ENCODE measurements at regions of chr6 and their contacts with region 1.

Region 1: GRCh38 chr6:131182991-131183425 is 47.7 kb downstream of the AKAP7 start:
- DNase-seq: peak; percentile 67 to 82 (median 80)
- H3K4me3 ChIP-seq: peak overlapping the region in 2 of 7 experiments; percentile 37 to 61
- H3K27ac ChIP-seq: no peak overlapping the region
- H3K4me1 ChIP-seq: peaks cover 0 to 7% (median 5%) of the 10 kb centered on the region in 4 experiments
- H3K27me3 ChIP-seq: no peaks in the 10 kb centered on the region

Region 2: DNA sequence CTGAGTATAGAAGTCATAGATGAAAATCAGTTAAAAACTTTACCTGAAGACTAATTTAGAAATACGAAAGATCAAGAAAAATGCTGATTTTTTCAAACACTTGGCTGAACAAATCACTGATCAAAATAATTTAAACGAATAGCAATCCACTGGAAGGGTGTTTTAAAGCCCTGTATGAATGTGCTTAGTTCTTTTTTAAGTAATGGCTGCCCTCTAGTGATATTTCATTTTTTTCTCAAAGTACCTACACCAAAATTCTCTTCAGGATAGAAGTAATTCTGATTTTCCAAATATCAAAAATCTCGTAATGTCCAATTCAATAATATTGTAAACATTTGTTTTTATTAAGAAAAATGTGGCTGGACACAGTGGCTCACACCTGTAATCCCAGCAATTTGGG is 15.2 kb before region 1 on chr6:
- CTCF ChIA-PET with region 1: interaction called, 10 read pairs
- POLR2A ChIA-PET with region 1: no interaction called
- DNase-seq: peak in 2 of 3 donors; percentile 8 to 9
- H3K4me3 ChIP-seq: no peak overlapping the region
- H3K27ac ChIP-seq: no peak overlapping the region
- H3K4me1 ChIP-seq: no peaks in the 10 kb centered on the region
- H3K27me3 ChIP-seq: no peaks in the 10 kb centered on the region

Region 3: DNA sequence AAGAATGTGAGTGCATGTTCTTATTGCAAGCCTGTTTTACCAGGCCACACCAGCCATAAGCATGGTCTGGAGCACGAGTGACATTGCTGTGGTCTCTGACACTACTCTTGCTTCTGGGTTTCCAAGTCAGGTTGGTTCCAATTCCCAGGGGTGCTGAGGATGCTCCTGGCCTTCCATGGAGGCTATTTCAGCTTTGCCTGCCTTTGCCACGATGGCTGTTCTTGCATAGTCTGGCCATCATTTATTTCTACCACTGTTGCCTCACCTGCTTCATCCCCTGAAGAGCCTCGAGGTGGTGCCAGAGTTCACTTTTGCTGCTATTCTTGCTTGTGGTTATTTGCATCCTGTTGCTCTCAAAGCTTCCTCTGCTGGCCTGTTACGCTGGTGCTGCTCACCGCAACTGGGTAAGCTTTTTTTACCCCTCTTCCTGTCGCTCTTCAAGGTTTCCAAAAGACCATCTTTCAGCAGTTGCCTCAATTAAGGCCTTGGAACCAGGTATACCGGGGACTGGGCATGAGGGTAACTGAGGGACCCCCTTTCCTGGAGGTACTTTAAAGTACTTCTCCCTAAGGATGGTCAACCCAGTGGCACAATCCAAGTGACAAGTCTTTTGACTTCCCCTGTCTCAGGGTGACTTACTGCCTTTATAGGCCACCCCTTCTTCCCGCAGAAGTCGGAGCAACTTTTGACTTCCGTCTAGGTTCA is 16.7 kb after region 1 on chr6:
- CTCF ChIA-PET with region 1: interaction called, 23 read pairs
- POLR2A ChIA-PET with region 1: no interaction called
- DNase-seq: peak; percentile 94 to 98 (median 97)
- H3K4me3 ChIP-seq: peak overlapping the region in 3 of 7 experiments; percentile 16 to 45 (median 43)
- H3K27ac ChIP-seq: peak overlapping the region in 1 of 2 experiments; percentile 44
- H3K4me1 ChIP-seq: peaks cover 22 to 40% (median 32%) of the 10 kb centered on the region in 4 experiments
- H3K27me3 ChIP-seq: no peaks in the 10 kb centered on the region

Region 4: DNA sequence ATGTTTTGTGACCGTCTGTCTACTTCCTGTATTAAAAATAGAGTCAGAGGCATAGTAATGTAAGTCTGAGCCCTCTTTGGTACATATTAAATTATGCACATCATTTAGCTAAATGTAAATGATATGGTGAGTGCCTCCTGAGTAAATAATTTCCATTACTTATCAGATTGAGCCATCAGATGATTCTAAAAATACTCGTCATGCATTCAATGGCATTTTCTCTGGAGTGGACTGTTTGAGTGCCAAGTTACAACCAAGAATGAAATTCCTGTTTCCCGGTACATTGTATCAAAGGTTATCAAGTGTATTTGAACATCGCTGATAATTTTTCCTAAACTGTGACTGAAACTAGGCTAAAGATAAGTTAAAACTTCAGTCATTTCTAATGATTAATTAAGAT is 33.2 kb after region 1 on chr6:
- CTCF ChIA-PET with region 1: no interaction called
- POLR2A ChIA-PET with region 1: no interaction called
- DNase-seq: no peak
- H3K4me3 ChIP-seq: no peak overlapping the region
- H3K27ac ChIP-seq: no peak overlapping the region
- H3K4me1 ChIP-seq: peaks cover 0 to 7% (median 4%) of the 10 kb centered on the region in 4 experiments
- H3K27me3 ChIP-seq: no peaks in the 10 kb centered on the region

Region 5: DNA sequence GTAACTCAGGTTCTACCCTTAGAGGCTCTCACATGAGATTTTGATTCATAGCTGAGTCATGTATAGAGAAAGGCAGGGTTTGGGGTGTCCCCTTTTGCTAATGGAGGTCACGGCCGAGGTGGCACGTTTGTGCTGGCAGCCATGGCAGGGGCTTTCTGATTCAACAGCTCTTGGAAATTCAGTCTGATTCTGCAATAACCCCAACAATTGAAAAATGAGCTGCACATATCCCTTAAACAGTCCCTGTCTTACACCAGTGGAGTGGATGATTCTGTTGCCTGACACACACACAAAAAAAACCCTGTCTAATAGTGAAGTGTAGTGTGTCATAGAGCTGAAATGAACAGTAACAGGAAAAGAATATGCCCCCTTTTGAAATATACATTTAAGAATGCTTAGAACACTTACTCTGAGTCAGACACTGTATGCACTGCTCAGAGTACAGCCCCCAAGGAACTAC is 349.6 kb after region 1 on chr6:
- CTCF ChIA-PET with region 1: interaction called, 38 read pairs
- POLR2A ChIA-PET with region 1: no interaction called
- DNase-seq: no peak
- H3K4me3 ChIP-seq: no peak overlapping the region
- H3K27ac ChIP-seq: no peak overlapping the region
- H3K4me1 ChIP-seq: peaks cover 0 to 9% (median 0%) of the 10 kb centered on the region in 4 experiments
- H3K27me3 ChIP-seq: no peaks in the 10 kb centered on the region